Colonic mucosa (tissue), 4 donors: ENCODE measurements at regions of chr2 and their contacts with region 1.

Region 1: DNA sequence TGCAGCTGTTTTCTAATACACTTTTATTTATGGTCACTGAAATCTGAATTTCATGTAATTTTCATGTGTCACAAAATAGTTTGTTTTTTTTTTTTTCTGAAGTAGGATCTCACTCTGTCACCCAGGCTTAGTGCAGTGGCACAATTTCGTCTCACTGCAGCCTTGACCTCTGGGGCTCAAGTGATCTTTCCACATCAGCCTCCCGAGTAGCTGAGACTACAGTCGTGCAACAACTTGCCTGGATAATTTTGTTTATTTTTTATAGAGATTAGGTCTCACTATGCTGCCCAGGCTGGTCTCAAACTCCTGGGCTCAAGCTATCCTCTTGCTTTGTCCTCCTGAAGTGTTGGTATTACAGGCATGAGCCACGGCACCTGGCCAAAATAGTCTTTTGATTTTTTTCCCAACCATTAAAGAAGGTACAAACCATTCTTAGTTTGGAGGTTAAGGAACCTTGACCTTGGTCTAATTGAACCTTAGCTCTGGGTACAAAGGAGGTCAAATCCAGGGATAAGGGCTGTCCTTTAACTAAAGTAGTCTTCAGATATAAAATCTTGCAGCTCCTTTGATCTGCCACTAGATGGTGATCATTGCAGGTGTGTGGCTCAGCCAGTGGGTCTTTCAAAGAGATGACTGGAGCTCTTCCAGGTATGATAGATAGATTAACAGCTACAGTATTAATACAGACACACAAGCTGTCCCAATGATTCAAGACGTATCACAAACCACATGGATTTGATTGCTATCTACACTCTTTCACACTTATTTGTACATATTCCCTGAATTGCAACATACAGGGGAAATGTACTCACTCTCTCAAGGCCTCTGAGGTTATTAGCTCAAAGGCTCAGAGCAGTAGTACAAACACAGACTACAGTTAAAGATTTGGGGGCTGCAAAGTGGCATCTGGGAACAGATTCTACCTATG is 4.7 kb upstream of the KRCC1 start:
- DNase-seq: no peak
- H3K4me3 ChIP-seq: no peak overlapping the region
- H3K27ac ChIP-seq: no peak overlapping the region
- H3K4me1 ChIP-seq: peaks cover 5% of the 10 kb centered on the region
- H3K27me3 ChIP-seq: no peaks in the 10 kb centered on the region
- CTCF ChIP-seq: peak; percentile 65

Region 2: GRCh38 chr2:88165332-88166003 is 105.2 kb after region 1 on chr2:
- intact Hi-C with region 1: loop called (anchors 2 kb)
- DNase-seq: no peak
- H3K4me3 ChIP-seq: no peak overlapping the region
- H3K27ac ChIP-seq: no peak overlapping the region
- H3K4me1 ChIP-seq: no peaks in the 10 kb centered on the region
- H3K27me3 ChIP-seq: no peaks in the 10 kb centered on the region
- CTCF ChIP-seq: no peak